Right ventricle myocardium inferior (tissue), 1 donor: ENCODE measurements at regions of chr1 and their contacts with region 1.

Region 1: GRCh38 chr1:154335025-154335714 is 9.8 kb downstream of the ATP8B2 start:
- DNase-seq: peak; percentile 92
- ATAC-seq: peak; percentile 66

Region 2: GRCh38 chr1:154198756-154199562 is 136.2 kb before region 1 on chr1:
- intact Hi-C with region 1: loop called (anchors 2 kb)
- DNase-seq: no peak
- ATAC-seq: peak; percentile 62

Region 3: GRCh38 chr1:154304664-154305337 is 30.4 kb before region 1 on chr1:
- intact Hi-C with region 1: no loop called
- DNase-seq: no peak
- ATAC-seq: no peak

Region 4: DNA sequence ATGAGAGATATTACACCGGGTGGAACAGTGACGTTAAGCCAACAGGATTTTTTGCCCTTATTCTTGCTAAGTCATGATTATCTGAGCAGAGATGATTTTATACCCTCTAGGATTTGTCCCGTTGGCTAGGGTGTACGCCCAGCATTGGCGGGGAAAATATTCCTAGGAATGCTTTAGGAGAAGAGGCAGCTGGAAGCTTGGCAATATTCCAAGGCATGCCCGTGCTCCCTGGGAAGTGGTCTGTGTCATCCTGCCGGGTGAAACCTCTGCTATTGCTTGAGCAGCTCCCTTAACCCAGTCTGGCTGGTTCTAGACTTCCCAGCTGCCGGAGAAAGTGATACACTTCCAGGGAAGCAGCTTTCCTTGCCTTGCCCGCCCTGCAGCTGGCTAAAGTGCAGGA is 248.6 kb after region 1 on chr1:
- intact Hi-C with region 1: no loop called
- DNase-seq: no peak
- ATAC-seq: no peak